Left ventricle myocardium inferior (tissue), 1 donor: ENCODE measurements at regions of chr20 and their contacts with region 1.

Region 1: GRCh38 chr20:55067158-55067825 is 591.9 kb downstream of the DOK5 start:
- DNase-seq: no peak
- H3K4me3 ChIP-seq: no peak overlapping the region
- H3K27ac ChIP-seq: peak overlapping the region; percentile 52
- H3K4me1 ChIP-seq: no peaks in the 10 kb centered on the region
- H3K27me3 ChIP-seq: no peaks in the 10 kb centered on the region
- CTCF ChIP-seq: no peak

Region 2: GRCh38 chr20:55004049-55004448 is 63.2 kb before region 1 on chr20:
- intact Hi-C with region 1: loop called (anchors 10 kb)
- DNase-seq: no peak
- H3K4me3 ChIP-seq: no peak overlapping the region
- H3K27ac ChIP-seq: no peak overlapping the region
- H3K4me1 ChIP-seq: peaks cover 3% of the 10 kb centered on the region
- H3K27me3 ChIP-seq: no peaks in the 10 kb centered on the region
- CTCF ChIP-seq: peak; percentile 47